Activated CD4-positive, alpha-beta T cell treated with anti-CD3 and anti-CD28 coated beads, Interleukin-2, amount 10 ng/mL, durations not matched to agents 7 days and 5 days (primary cell): ENCODE measurements at regions of chr1 and their contacts with region 1.

Region 1: GRCh38 chr1:153990468-153991150 is at the start of gene RPS27:
- DNase-seq: peak; percentile 94
- H3K4me3 Mint-ChIP-seq: peak within 1 kb of the TSS; percentile 87
- H3K27ac Mint-ChIP-seq: peak within 1 kb of the TSS; percentile 96
- H3K4me1 Mint-ChIP-seq: peaks cover 39% of the 10 kb centered on the region
- H3K27me3 Mint-ChIP-seq: no peaks in the 10 kb centered on the region
- total RNA-seq, gene RPS27: 2,596 to 2,883 TPM

Region 2: GRCh38 chr1:153670859-153671627 is 319.6 kb before region 1 on chr1 and contains the start of gene ILF2:
- CTCF ChIA-PET with region 1: interaction called, 4 read pairs
- POLR2A ChIA-PET with region 1: interaction called, 10 read pairs
- DNase-seq: peak; percentile 98
- H3K4me3 Mint-ChIP-seq: no peak within 1 kb of the TSS
- H3K27ac Mint-ChIP-seq: no peak within 1 kb of the TSS
- H3K4me1 Mint-ChIP-seq: peaks cover 32% of the 10 kb centered on the region
- H3K27me3 Mint-ChIP-seq: no peaks in the 10 kb centered on the region
- total RNA-seq, gene ILF2: 192 to 223 TPM

Region 3: DNA sequence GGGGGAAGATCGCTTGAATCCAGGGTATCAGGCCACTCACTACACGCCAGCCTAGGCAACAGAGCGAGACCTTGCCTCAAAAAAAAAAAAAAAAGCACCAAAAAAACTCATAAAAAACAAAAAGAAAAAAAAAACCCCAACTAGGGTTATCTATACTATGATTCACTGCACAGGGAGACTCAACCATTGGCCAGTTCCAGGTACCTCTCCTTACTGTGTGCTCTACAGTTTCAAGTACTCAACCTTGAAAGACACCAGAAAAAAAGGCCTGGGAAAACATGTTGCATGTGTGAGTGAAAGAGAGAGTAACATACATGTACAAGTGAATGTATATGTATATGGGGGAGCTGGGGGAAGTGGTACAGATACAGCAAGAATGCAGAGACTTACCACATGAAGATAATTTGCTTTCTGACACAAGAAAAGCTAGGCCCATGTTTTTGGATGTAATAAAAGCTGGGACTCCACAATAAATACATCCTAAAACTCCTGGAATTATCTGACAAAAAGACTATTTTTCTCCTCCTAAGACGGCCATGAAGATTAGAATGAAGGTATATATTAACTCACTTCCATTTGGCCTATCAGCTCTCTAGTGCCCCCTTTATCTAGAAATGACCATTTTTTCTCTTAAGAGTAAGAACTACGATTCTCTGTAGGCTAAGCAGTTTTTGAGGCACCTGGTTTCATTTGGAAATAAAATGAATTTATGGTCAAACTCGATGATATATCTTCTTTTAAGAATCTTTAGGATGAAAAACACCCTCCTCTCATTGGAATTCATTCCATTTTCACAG is 163.2 kb before region 1 on chr1:
- CTCF ChIA-PET with region 1: interaction called, 14 read pairs
- POLR2A ChIA-PET with region 1: no interaction called
- DNase-seq: no peak
- H3K4me3 Mint-ChIP-seq: no peak overlapping the region
- H3K27ac Mint-ChIP-seq: no peak overlapping the region
- H3K4me1 Mint-ChIP-seq: no peaks in the 10 kb centered on the region
- H3K27me3 Mint-ChIP-seq: no peaks in the 10 kb centered on the region

Region 4: DNA sequence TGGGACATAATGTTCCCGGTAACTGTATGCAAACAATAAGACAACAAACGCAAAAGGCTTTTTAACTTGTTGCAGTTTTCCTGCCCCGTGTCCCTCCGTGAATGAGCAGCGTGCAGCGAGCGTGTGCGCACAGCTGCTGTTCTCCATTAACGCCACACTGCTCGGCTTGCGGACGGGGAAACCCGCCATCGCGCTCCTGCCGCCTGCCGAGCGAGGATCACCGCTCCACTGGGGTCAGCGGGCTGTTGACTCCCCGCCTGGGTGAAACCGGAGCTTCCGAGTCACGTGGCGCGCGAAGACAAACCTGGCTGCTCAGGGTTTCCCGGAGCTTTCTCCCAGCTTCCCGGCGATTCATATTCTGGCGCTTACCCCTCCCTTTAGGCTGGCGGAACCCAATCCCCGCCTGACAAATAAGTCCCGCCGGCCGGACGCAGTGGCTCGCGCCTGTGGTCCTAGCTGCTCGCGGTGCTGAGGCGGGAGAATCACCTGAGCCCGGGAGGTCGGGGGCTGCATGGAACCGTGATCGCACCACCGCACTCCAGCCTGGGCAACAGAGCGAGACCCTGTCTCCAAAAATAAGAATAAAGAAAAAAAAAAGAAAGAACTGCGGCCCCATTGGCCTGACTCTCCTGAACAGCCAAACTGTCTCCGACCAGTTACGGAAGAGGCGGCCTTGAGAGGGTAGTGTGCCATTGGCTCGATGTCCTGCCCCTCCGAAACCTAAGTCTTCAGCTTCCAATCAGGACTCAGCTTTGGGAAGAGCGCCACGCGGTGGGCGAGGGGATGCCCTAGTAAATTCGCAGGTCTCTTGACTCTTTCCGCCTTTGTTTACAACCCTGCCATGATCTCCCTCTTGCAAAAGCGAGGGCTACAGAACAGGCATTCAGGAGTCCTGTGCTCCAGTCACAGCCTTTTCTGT is 23.3 kb before region 1 on chr1 and contains the start of gene CREB3L4:
- CTCF ChIA-PET with region 1: interaction called, 21 read pairs
- POLR2A ChIA-PET with region 1: interaction called, 4 read pairs
- DNase-seq: peak; percentile 90
- H3K4me3 Mint-ChIP-seq: peak within 1 kb of the TSS; percentile 88
- H3K27ac Mint-ChIP-seq: peak within 1 kb of the TSS; percentile 95
- H3K4me1 Mint-ChIP-seq: peaks cover 62% of the 10 kb centered on the region
- H3K27me3 Mint-ChIP-seq: no peaks in the 10 kb centered on the region
- total RNA-seq, gene CREB3L4: 6.9 to 7.9 TPM

Region 5: GRCh38 chr1:153977250-153978240 is 13.1 kb before region 1 on chr1 and contains the start of gene JTB:
- CTCF ChIA-PET with region 1: interaction called, 32 read pairs
- POLR2A ChIA-PET with region 1: interaction called, 8 read pairs
- DNase-seq: peak; percentile 90
- H3K4me3 Mint-ChIP-seq: peak within 1 kb of the TSS; percentile 97
- H3K27ac Mint-ChIP-seq: peak within 1 kb of the TSS; percentile 92
- H3K4me1 Mint-ChIP-seq: peaks cover 47% of the 10 kb centered on the region
- H3K27me3 Mint-ChIP-seq: no peaks in the 10 kb centered on the region
- total RNA-seq, gene JTB: 111 to 124 TPM